Sciatic nerve (tissue), 2 donors: ENCODE measurements at regions of chr19 and their contacts with region 1.

Region 1: DNA sequence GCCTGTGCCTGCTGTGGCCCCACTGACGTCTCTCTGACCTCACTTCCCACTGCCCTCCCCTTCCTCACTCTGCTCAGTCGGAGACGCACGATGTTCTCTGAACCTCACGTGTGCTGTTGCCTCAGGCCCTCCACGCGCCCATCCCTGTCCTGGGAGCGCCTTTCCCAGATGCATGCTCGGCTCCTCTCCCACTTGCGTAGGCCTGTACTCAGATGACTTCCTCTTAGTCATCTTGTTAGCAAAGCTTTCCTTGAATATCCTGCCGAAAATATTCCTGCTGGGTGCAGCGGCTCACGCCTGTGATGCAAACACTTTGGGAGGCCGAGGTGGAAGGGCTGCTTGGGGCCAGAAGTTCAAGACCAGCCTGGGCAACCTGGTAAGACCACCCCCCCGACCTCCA is 9.3 kb upstream of the SYT5 start:
- DNase-seq: no peak
- ATAC-seq: no peak

Region 2: DNA sequence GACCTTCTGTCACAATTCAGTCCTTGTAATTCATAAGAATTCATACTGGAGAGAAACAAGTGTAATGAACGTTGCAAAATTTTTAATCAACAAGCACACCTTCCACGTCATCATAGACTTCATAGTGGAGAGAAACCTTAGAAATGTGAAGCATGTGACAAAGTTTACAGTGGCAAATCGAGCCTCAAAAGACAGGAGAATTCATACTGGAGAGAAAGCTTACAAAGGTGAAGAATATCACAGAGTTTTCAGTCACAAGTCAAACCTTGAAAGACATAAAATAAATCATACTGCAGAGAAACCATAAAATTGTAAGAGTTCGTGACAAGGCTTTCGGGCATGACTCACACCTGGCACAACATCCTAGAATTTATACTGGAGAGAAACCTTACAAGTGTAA is 1697.3 kb before region 1 on chr19:
- intact Hi-C with region 1: loop called (anchors 5 kb)
- DNase-seq: no peak
- ATAC-seq: no peak

Region 3: GRCh38 chr19:54373781-54374631 is 815.4 kb before region 1 on chr19:
- intact Hi-C with region 1: loop called (anchors 5 kb)
- DNase-seq: no peak
- ATAC-seq: peak; percentile 65